GM12878 (cell line): ENCODE measurements at regions of chr15 and their contacts with region 1.

Region 1: DNA sequence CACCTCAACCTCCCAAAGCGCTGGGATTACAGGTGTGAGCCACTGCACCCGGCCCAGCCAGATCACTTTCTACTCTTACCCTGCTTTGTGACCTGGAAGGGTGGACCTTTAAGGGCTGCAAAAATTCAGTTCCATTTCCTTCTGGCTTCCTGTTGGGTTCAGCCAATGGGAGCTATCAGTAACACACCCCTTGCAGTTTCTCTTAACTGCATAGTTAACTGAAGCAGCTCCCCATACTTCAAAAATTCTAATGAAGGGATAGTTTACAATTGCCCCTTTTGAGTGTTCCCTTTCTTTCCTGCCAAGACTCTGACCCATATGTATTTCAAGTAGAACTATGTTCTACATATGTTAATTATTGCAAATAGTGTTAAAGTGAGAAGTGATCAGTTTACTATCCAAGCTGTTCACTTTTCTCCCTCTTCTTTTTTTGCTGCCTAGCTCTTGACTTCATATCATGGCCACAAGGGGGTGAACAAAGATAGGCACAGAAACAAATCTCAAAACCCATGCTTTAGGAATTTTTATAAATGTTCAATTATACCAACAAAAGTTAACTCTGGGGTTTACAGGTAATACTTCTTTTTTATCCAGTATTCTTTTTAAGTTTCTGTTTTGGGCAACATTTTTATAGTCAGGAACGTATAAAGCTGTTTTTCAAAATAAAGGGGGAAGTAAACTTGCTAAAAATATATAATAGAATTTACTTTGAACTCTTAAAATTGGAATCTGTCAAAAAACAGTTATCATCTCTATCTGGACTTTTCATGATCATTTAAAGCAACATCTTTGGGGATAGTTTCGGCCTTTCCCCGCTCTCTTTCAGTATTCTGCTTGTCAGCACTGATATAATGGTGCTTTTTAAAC is 8.1 kb downstream of the PGBD4 start:
- DNase-seq: no peak
- ATAC-seq: peak; percentile 84
- H3K4me3 ChIP-seq: no peak overlapping the region
- H3K27ac ChIP-seq: no peak overlapping the region
- H3K4me1 ChIP-seq: no peaks in the 10 kb centered on the region
- H3K27me3 ChIP-seq: no peaks in the 10 kb centered on the region
- CTCF ChIP-seq: peak; percentile 65 to 73 (median 67)
- EP300 ChIP-seq: no peak
- POLR2A ChIP-seq: no peak
- RAD21 ChIP-seq: peak; percentile 90

Region 2: DNA sequence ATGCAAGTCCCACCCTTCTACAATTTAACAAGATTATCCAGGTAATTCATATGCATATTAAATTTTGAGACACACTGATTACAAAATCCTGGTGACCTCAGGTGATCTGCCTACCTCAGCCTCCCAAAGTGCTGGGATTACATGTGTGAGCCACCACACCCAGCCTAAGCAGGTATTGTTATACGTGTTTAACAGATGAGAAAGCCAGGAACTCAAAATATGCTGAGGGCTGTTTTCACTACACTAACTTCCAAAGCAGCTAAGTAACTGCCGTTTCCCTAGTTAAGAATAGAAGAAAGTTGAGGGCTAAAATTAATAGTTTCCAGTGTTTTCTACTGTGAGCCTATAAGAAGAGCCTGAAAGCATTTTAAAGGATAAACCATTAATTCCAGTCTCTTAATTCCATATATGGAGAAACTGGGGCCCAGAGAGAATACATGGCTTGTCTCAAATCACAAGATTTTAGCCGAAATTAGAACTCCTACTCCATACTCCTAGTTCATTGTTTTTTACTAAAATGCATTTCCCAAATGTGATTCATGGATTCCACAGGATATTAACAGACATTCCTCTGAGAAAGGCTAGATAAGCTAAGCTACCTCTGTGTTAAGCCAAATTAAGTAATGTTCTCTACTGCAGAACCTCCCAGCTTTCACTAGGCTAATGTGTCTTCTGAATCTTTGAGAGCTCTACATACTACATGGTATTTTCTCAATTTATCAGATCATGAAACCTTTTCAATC is 54.0 kb before region 1 on chr15:
- CTCF ChIA-PET with region 1: interaction called, 15 read pairs
- POLR2A ChIA-PET with region 1: no interaction called
- RAD21 ChIA-PET with region 1: no interaction called
- SMC1A ChIA-PET with region 1: interaction called, 4 read pairs
- in situ Hi-C with region 1: no loop called
- intact Hi-C with region 1: no loop called
- DNase-seq: no peak
- ATAC-seq: no peak
- H3K4me3 ChIP-seq: no peak overlapping the region
- H3K27ac ChIP-seq: no peak overlapping the region
- H3K4me1 ChIP-seq: no peaks in the 10 kb centered on the region
- H3K27me3 ChIP-seq: no peaks in the 10 kb centered on the region
- CTCF ChIP-seq: no peak
- EP300 ChIP-seq: no peak
- POLR2A ChIP-seq: no peak
- RAD21 ChIP-seq: no peak

Region 3: GRCh38 chr15:34209421-34210282 is 99.6 kb after region 1 on chr15 and contains the start of gene KATNBL1:
- CTCF ChIA-PET with region 1: interaction called, 136 read pairs
- POLR2A ChIA-PET with region 1: interaction called, 5 read pairs
- RAD21 ChIA-PET with region 1: interaction called, 71 read pairs
- SMC1A ChIA-PET with region 1: interaction called, 65 read pairs
- in situ Hi-C with region 1: no loop called
- intact Hi-C with region 1: loop called (anchors 1 kb)
- DNase-seq: peak; percentile 70
- ATAC-seq: peak; percentile 98
- H3K4me3 ChIP-seq: peak within 1 kb of the TSS; percentile 76
- H3K27ac ChIP-seq: peak within 1 kb of the TSS; percentile 53
- H3K4me1 ChIP-seq: 0 out of 2 replicates have a peak, but pooled peaks cover 3% of the 10 kb centered on the region
- H3K27me3 ChIP-seq: no peaks in the 10 kb centered on the region
- CTCF ChIP-seq: peak; percentile 82 to 89 (median 86)
- EP300 ChIP-seq: no peak
- POLR2A ChIP-seq: peak; percentile 88
- RAD21 ChIP-seq: peak; percentile 89
- polyA plus RNA-seq, gene KATNBL1: 7.8 to 11.9 TPM

Region 4: GRCh38 chr15:34374816-34375215 is 264.8 kb after region 1 on chr15:
- CTCF ChIA-PET with region 1: no interaction called
- POLR2A ChIA-PET with region 1: no interaction called
- RAD21 ChIA-PET with region 1: no interaction called
- SMC1A ChIA-PET with region 1: no interaction called
- in situ Hi-C with region 1: no loop called
- intact Hi-C with region 1: loop called (anchors 5 kb)
- DNase-seq: no peak
- ATAC-seq: no peak
- H3K4me3 ChIP-seq: no peak overlapping the region
- H3K27ac ChIP-seq: no peak overlapping the region
- H3K4me1 ChIP-seq: peaks cover 6% of the 10 kb centered on the region
- H3K27me3 ChIP-seq: no peaks in the 10 kb centered on the region
- CTCF ChIP-seq: no peak
- EP300 ChIP-seq: no peak
- POLR2A ChIP-seq: no peak
- RAD21 ChIP-seq: no peak